Endothelial cell of umbilical vein (primary cell): ENCODE measurements at regions of chr17 and their contacts with region 1.

Region 1: DNA sequence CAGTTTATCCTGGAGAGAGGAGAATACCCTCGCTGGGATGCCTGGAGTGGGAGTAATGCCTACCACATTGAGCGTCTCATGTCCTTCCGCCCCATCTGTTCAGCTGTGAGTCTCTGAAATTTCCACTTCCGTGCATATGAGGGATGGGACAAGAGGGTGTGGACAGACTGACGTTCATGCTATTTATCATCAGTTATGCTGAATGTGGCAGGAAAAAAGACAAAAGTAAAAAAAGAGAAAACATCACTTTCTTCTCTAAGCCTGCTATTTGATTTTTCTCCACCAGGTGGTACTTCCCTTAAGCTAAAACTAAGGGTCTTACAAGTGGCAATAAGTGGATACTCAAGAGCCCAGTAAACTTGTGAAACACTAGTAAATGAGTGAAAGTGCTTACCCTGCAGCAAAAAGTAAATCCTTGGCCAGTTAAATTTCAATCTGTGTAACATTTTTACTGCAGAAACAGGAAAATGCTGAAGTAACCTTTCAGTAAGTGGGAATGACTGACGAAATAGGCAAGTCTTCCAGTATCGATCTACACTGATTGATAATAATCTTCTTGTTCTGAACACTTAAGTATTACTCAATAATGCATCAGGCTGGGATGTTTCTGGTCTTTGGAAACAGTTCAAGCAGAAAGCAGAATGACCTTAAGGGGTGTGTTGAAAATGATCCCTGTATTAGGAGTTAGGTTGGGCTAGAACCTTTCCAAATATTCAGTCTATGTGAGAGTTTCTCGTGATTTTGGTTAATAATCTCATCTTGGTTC is 5.6 kb downstream of the CRYBA1 start:
- DNase-seq: peak; percentile 51
- H3K4me3 ChIP-seq: no peak overlapping the region
- H3K27ac ChIP-seq: no peak overlapping the region
- H3K4me1 ChIP-seq: peaks cover 24% of the 10 kb centered on the region
- H3K27me3 ChIP-seq: no peaks in the 10 kb centered on the region
- CTCF ChIP-seq: peak; percentile 37 to 42
- POLR2A ChIP-seq: no peak

Region 2: DNA sequence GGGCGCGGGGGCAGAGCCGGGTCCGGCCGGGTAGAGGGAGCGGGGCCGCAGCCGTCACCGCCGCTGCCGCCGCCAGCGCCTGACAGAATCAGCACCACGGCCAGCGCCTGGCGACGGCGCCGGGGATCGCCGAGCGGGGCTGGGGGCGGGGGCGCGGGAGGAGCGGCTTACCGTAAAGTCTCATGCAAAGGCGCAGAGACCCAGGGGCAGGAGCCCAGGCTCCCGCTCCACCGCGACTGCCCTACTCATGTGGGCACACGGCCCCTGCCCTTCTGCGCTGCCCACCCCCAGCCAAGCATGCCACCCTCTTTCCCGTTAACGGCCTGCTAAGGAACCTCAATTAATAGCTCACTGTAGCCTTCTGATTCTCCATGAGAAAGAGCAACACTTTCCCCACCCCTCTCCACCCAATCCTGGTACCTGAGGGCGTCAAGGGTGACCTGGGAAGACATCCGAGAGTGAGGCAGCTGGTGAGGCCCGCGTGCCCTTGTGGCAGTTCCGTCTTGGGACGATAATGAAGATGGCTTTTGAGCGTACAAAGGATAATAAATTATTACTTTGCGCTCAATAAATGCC is 246.3 kb before region 1 on chr17 and contains the start of gene SEZ6:
- CTCF ChIA-PET with region 1: no interaction called
- POLR2A ChIA-PET with region 1: no interaction called
- dilution Hi-C with region 1: no loop called
- intact Hi-C with region 1: no loop called
- DNase-seq: peak; percentile 52
- H3K4me3 ChIP-seq: no peak within 1 kb of the TSS
- H3K27ac ChIP-seq: no peak within 1 kb of the TSS
- H3K4me1 ChIP-seq: no peaks in the 10 kb centered on the region
- H3K27me3 ChIP-seq: peaks cover 42 to 43% of the 10 kb centered on the region in 2 experiments
- CTCF ChIP-seq: no peak
- POLR2A ChIP-seq: no peak
- total RNA-seq, gene SEZ6: not detected in 2 replicates

Region 3: GRCh38 chr17:29124117-29124924 is 128.0 kb before region 1 on chr17:
- CTCF ChIA-PET with region 1: interaction called, 23 read pairs
- POLR2A ChIA-PET with region 1: no interaction called
- dilution Hi-C with region 1: no loop called
- intact Hi-C with region 1: no loop called
- DNase-seq: peak; percentile 61
- H3K4me3 ChIP-seq: no peak overlapping the region
- H3K27ac ChIP-seq: no peak overlapping the region
- H3K4me1 ChIP-seq: no peaks in the 10 kb centered on the region
- H3K27me3 ChIP-seq: no peaks in the 10 kb centered on the region
- CTCF ChIP-seq: peak; percentile 60 to 61
- POLR2A ChIP-seq: no peak

Region 4: DNA sequence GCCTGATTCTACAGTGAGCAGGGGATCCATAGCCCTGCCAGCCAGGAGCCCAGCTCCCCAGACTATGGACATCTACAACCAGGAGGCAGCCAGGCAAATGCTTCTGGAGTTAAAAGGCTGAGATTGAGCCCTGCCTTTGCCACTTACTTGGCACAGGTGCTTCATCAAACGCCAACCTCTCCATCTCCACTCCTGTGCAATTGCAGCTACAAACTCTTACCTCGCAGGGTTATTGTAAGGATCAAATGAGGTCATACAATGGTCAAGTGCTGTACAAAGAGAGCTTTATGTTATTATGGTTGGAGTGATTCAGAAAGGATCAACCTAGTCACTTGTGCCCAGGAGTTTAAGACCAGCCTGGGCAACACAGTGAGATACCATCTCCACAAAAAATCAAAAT is 62.2 kb before region 1 on chr17:
- CTCF ChIA-PET with region 1: no interaction called
- POLR2A ChIA-PET with region 1: no interaction called
- dilution Hi-C with region 1: no loop called
- intact Hi-C with region 1: no loop called
- DNase-seq: no peak
- H3K4me3 ChIP-seq: no peak overlapping the region
- H3K27ac ChIP-seq: no peak overlapping the region
- H3K4me1 ChIP-seq: no peaks in the 10 kb centered on the region
- H3K27me3 ChIP-seq: peaks cover 6% of the 10 kb centered on the region in 2 experiments
- CTCF ChIP-seq: no peak
- POLR2A ChIP-seq: no peak